ENCODE measurements at regions of chr2 and their contacts with region 1.

Region 1: DNA sequence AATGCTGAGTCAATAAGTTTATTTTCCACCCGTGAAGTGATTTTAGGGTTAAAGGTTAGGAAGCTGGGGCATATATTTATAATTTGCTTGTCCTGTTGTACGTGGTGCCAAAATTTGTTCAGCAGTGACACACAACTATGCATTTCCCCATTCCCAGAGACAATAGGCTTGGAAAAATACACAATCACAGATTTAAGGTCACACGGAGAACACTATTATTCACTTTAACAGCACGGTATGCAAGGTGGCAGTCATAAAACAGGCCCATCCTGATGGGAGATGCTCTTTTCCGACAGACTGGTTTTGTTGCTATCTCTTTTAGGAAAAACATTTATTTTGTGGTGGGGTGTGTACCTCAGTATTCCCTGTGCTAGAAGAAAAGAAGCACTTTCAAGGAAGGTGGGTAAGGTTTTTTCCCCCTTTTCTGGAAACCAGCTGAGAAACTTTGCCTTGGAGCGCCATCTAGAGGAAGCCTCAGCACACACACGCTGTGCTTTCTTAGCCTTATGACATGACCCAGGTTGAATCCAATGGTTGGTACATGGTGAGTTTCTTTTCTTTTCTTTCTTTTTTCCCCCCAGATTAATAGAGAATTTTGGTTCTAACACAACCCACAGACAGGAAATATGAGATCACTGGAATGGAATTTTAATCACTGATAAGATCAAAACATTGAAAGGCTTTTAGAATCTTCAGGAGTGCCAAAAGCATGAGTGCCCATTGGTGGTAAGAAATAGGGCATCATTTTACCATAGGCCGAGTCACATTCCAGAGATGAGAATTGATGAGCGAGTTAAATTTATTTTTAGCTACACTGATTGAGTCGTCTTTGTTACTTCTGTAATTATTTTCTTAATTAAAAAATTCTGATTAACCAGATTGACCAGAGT is 332.1 kb downstream of the AGPS start:
- DNase-seq: peak; percentile 35 to 67 (median 53)
- ATAC-seq: peak; percentile 80
- H3K4me3 ChIP-seq: no peak overlapping the region
- H3K4me1 ChIP-seq: no peaks in the 10 kb centered on the region
- CTCF ChIP-seq: peak; percentile 76

Region 2: DNA sequence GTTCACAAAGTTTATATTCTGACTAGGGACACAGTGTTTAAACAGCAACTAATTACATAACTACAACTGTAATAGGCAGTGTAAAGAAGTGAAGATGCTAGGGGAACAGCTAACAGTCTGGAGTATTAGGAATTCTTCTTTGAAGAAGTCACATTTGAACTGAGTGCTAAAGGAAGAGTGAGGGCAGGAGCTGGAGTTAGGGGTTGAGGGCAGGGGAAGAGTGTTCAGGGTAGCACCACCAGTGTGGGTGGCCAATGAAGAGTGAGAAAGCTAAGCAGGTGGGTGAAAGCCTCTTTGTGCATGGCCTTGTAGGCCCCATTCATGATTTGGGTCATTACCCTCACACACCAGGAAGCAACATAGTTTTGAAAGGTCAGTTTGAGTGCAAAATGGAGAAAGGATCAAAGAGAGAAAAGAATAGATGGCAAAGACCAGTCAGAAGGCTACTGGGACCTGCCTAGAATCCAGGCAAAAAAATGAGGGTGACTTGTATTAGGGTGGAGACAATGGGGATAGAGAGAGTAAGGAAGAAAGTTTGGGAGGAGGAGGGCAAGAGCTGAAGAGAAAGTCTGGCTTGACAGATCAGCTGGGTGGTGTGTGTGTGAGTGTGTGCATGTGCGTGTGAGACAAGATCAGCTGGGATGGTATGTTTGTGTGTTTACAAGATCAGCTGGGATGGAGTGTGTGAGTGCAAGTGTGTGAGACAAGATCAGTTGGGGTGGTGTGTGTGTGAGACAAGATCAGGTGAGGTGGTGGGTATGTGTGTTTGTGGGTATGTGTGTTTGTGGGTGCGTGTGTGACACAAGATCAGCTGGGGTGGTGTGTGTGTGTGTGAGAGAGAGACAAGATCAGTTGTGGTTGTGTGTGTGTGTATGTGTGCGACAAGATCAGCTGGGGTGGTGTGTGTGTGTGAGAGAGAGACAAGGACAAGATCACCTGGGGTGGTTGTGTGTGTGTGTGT is 375.6 kb before region 1 on chr2:
- intact Hi-C with region 1: loop called in 1 of 2 experiments (anchors 10 kb)
- DNase-seq: no peak
- ATAC-seq: no peak
- H3K4me3 ChIP-seq: no peak overlapping the region
- H3K4me1 ChIP-seq: peaks cover 5% of the 10 kb centered on the region
- CTCF ChIP-seq: no peak

Region 3: GRCh38 chr2:177474301-177474700 is 250.3 kb before region 1 on chr2:
- intact Hi-C with region 1: no loop called
- DNase-seq: no peak
- ATAC-seq: no peak
- H3K4me3 ChIP-seq: no peak overlapping the region
- H3K4me1 ChIP-seq: peaks cover 2% of the 10 kb centered on the region
- CTCF ChIP-seq: no peak

Region 4: GRCh38 chr2:177489719-177490301 is 234.8 kb before region 1 on chr2:
- intact Hi-C with region 1: loop called in 1 of 2 experiments (anchors 10 kb)
- DNase-seq: peak in 1 of 3 donors; percentile 31
- ATAC-seq: no peak
- H3K4me3 ChIP-seq: no peak overlapping the region
- H3K4me1 ChIP-seq: no peaks in the 10 kb centered on the region
- CTCF ChIP-seq: no peak

Region 5: DNA sequence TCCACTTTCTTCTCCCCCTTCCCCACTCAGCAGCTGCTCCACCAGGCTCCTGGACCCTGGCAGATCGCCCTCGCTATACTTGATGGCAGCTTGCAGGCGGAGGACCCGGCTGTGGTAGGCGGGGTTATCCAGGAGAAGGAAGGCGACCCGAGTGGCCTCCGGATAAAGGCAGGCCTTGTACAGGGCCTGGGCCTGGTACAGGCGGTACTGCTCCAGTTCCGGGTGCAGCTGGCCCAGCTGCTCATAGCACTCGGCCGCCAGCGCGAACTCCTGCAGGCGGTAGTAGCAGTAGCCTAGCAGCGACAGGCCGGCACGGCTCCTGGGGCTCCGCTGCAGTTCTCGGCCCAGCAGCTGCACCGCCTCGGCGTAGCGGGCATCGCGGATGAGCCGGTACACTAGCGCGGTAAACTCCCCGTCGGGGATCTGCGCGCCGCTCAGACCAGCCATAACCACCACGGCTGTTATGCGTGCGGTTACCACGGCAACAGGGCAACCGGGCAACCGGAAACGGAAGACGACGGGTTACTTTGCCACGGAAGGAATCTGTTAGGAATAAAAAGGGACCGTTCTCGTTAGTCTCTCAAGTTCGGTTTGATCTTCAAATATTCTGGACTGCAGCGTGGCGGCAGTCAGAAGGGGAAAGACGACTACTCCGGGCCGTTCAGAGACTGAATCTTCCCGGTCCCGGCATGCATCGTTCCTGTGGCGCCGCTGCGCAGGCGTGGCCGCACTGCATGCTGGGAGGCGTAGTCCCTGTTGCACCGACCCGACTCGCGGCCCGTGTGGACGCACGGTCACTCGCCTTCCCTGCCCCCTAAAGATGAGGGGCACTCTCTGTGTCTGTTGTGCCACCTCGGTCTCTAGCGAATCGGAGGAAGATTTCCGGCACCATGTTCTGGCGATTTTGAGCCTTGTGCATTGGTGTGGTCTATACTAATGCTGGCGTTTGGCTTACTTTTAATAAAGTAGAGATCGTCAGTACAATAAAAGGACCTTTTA is 106.1 kb before region 1 on chr2:
- intact Hi-C with region 1: loop called in 1 of 2 experiments (anchors 1 kb)
- DNase-seq: peak; percentile 92 to 97 (median 94)
- ATAC-seq: peak; percentile 97
- H3K4me3 ChIP-seq: peak overlapping the region; percentile 70
- H3K4me1 ChIP-seq: no peaks in the 10 kb centered on the region
- CTCF ChIP-seq: no peak

Region 6: GRCh38 chr2:178018141-178018540 is 293.5 kb after region 1 on chr2:
- intact Hi-C with region 1: no loop called
- DNase-seq: no peak
- ATAC-seq: no peak
- H3K4me3 ChIP-seq: no peak overlapping the region
- H3K4me1 ChIP-seq: no peaks in the 10 kb centered on the region
- CTCF ChIP-seq: no peak